ENCODE measurements at regions of chr10 and their contacts with region 1.

Region 1: DNA sequence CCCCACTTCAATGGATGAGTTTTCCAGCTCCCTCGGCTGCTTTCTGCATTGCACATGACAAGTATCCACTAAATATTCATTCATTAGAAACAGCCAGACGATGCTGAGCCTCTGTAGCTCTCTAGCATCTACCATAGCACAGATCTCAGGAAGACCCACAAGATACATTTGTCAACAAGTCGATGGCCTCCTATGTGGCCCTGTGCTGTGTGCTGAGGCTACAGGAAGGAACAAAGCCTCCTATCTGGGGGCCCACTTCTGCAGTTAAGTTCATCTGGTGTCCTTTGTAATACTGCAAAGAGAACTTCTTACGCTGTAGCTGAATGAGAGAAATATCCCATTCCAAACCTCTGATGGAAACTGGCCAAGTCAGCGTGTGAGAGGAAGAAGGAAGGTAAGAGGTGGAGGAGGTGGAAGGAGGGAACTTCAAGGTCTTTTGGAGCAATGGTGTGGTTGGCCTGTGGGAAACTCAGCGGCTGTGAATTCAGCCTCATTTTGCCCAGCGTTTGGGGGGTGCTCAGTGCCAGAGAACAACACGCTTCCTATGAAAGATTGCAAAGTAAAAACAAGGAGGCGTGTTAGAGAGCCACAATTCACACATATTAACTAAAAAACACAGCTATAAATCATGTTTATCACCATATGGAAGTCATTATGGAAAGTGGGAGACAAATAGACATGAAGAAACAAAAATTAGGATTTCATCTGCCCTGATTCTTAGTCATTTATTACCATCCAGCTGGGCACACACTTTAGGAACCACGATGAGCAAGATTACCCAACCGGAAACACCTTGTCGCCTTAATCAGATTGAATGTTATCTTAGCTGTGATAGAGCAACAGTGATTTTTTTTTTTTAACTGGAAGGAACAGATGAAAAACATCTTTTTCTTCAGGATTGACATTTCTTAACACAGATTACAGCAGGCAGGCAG is 62.2 kb upstream of the USP6NL start:
- DNase-seq: peak in 2 of 3 donors; percentile 77 to 87
- H3K4me3 ChIP-seq: peak overlapping the region in 3 of 7 experiments; percentile 6 to 45 (median 13)
- H3K27ac ChIP-seq: no peak overlapping the region
- H3K4me1 ChIP-seq: peaks cover 7 to 25% (median 18%) of the 10 kb centered on the region in 4 experiments
- H3K27me3 ChIP-seq: peaks cover 0 to 2% (median 0%) of the 10 kb centered on the region in 5 experiments

Region 2: GRCh38 chr10:11661441-11661840 is 12.2 kb before region 1 on chr10:
- CTCF ChIA-PET with region 1: interaction called, 10 read pairs
- POLR2A ChIA-PET with region 1: no interaction called
- DNase-seq: no peak
- H3K4me3 ChIP-seq: no peak overlapping the region
- H3K27ac ChIP-seq: no peak overlapping the region
- H3K4me1 ChIP-seq: peaks cover 0 to 20% (median 19%) of the 10 kb centered on the region in 4 experiments
- H3K27me3 ChIP-seq: no peaks in the 10 kb centered on the region

Region 3: DNA sequence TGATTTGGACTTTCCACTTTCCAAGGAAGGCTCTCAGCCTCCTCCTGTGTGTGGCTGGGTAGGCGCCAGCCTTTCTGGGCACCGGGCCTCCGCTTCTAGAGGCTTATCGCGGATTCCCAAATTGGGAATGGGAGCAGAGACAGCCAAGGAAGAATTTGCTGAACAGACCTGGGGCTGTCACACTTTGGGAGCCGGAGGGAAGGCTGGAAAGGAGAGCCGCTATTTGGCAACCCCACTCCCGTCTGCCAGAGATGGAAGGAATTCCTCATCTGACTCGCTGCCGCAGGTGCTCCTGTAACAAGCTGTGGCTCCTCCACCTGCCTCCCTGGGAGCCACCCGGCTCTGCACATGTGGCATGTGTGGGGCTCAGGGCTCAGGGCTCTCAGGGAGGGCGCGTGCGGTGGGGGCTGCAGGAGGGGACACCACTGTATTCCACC is 17.7 kb after region 1 on chr10:
- CTCF ChIA-PET with region 1: no interaction called
- POLR2A ChIA-PET with region 1: no interaction called
- DNase-seq: no peak
- H3K4me3 ChIP-seq: no peak overlapping the region
- H3K27ac ChIP-seq: no peak overlapping the region
- H3K4me1 ChIP-seq: peaks cover 0 to 35% (median 22%) of the 10 kb centered on the region in 4 experiments
- H3K27me3 ChIP-seq: no peaks in the 10 kb centered on the region